Posterior vena cava (tissue), 2 donors: ENCODE measurements at regions of chr22 and their contacts with region 1.

Region 1: GRCh38 chr22:19178656-19179496 is at the start of gene SLC25A1:
- DNase-seq: peak; percentile 96
- total RNA-seq, gene SLC25A1: 46.2 to 47.8 TPM

Region 2: GRCh38 chr22:17994424-17995108 is 1184.3 kb before region 1 on chr22:
- intact Hi-C with region 1: loop called in 1 of 2 experiments (anchors 5 kb)
- DNase-seq: no peak

Region 3: DNA sequence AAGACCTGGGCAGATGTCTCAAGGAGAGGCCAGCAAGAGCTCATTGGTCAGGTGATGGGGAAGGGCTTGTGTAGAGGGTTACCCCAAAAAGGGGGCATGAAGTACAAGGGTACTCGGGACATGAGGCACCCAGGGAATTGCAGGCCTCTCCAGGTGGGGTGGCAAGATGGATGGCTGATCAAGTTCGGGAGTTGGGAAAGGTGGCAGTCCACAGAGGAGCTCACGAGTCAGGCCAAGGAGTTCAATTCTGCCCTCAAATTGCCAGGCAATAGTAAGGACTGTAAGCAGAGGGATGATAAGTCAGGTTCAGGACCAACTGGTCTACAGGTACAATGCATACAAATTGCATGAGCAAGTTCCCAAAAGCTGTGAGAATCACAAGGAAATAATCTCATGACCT is 42.0 kb after region 1 on chr22:
- intact Hi-C with region 1: loop called in 1 of 2 experiments (anchors 2 kb)
- DNase-seq: peak; percentile 64

Region 4: GRCh38 chr22:19287076-19287724 is 108.3 kb after region 1 on chr22:
- intact Hi-C with region 1: no loop called
- DNase-seq: no peak